MCF 10A (cell line): ENCODE measurements at regions of chr2 and their contacts with region 1.

Region 1: GRCh38 chr2:27322766-27323595 is at the start of gene MPV17:
- DNase-seq: peak; percentile 95
- H3K4me3 Mint-ChIP-seq: peak within 1 kb of the TSS; percentile 91
- H3K27ac Mint-ChIP-seq: peak within 1 kb of the TSS; percentile 99
- H3K4me1 Mint-ChIP-seq: peaks cover 23% of the 10 kb centered on the region
- H3K27me3 Mint-ChIP-seq: no peaks in the 10 kb centered on the region
- CTCF ChIP-seq: no peak
- total RNA-seq, gene MPV17: 104 and 114 TPM in 2 replicates

Region 2: DNA sequence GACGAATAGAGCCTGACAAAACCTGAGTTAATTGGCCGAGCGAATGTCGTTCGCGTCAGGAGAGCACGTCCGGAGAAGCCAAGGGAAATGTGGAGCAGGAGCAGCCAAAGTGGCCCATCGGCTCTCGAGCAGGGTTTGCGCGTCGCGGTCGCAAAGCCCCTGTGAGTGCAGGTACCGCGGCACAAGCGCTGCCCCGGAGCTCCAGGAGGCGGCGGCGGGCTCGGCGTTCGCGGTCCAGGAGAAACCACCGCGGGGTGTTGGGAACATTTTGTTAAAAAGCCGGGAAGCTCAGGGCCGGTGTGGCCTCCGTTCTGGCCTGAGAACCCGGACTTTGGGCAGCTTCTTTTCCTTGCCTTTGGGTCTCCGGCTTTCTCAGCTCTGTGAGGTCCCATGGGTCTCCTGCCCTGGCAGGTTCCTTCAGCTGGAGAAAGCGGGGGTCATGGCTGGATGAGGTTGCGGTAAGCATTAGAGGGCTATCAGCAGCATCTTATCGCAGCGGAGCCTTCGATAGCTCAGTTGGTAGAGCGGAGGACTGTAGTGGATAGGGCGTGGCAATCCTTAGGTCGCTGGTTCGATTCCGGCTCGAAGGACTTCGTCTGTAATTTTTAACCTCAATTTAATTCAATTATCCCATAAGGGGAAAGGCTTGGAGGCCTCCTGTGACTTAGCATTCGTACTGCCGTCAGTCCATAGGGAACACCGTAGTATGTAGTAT is 272.5 kb before region 1 on chr2:
- CTCF ChIA-PET with region 1: no interaction called
- POLR2A ChIA-PET with region 1: interaction called, 13 read pairs
- intact Hi-C with region 1: no loop called
- DNase-seq: peak; percentile 93
- H3K4me3 Mint-ChIP-seq: peak overlapping the region; percentile 93
- H3K27ac Mint-ChIP-seq: peak overlapping the region; percentile 84
- H3K4me1 Mint-ChIP-seq: no peaks in the 10 kb centered on the region
- H3K27me3 Mint-ChIP-seq: no peaks in the 10 kb centered on the region
- CTCF ChIP-seq: no peak

Region 3: GRCh38 chr2:27281855-27282559 is 41.0 kb before region 1 on chr2 and contains the start of gene TRIM54:
- CTCF ChIA-PET with region 1: interaction called, 12 read pairs
- POLR2A ChIA-PET with region 1: no interaction called
- intact Hi-C with region 1: no loop called
- DNase-seq: no peak
- H3K4me3 Mint-ChIP-seq: no peak within 1 kb of the TSS
- H3K27ac Mint-ChIP-seq: no peak within 1 kb of the TSS
- H3K4me1 Mint-ChIP-seq: peaks cover 12% of the 10 kb centered on the region
- H3K27me3 Mint-ChIP-seq: peaks cover 16% of the 10 kb centered on the region
- CTCF ChIP-seq: no peak
- total RNA-seq, gene TRIM54: not detected in 2 replicates

Region 4: DNA sequence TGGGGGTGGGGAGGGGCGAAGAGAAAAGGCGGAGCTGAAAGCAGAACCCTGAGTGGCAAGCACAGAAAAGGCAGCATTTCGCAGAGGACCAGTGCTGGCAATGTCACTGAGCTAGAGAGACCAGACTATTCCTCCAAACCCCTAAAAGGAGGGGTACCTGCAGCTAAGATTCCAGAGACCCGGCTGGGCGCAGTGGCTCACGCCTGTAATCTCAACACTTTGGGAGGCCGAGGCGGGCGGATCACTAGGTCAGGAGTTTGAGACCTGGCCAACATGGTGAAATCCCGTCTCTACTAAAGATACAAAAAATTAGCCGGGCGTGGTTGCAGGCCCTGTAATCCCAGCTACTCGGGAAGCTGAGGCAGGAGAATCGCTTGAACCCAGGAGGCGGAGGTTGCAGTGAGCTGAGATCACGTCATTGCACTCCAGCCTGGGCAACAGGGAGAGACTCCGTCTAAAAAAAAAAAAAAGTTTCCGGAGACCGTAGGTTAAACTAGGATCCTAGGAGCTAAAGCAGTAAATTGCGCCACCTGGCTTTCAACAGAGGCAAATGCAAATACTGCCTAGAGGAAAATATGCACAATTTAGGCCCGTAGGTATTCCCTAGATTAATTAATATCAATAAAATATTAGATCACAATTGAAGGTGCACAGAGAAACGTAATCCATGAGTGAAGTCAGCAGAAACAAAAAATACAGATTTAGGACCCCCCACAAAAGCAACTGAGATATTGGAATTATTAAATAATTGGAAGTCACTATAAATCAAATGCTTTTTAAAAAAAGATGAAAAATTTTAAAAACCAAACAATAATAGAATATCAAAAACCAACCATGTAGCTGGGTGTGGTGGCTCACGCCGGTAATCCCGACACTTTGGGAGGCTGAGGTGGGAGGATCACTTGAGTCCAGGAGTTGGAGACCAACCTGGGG is 19.6 kb before region 1 on chr2:
- CTCF ChIA-PET with region 1: interaction called, 23 read pairs
- POLR2A ChIA-PET with region 1: interaction called, 13 read pairs
- intact Hi-C with region 1: no loop called
- DNase-seq: peak; percentile 77
- H3K4me3 Mint-ChIP-seq: peak overlapping the region; percentile 31
- H3K27ac Mint-ChIP-seq: no peak overlapping the region
- H3K4me1 Mint-ChIP-seq: no peaks in the 10 kb centered on the region
- H3K27me3 Mint-ChIP-seq: no peaks in the 10 kb centered on the region
- CTCF ChIP-seq: peak; percentile 76

Region 5: DNA sequence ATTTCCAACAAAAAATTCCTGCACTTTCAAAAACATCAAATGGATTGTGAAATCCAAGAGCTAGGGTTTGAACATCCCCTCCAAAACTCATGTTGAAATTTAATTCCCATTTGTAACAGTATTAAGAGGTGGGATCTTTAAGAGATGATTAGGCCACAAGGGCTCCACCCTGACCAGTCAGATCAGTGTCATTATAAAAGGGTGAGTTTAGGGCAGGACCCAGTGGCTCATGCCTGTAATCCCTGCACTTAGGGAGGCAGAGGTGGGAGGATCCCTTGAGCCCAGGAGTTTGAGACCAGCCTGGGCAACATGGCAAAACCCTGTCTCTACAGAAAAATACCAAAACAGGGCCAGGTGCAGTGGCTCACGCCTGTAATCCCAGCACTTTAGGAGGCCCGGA is 24.7 kb after region 1 on chr2:
- CTCF ChIA-PET with region 1: interaction called, 8 read pairs
- POLR2A ChIA-PET with region 1: interaction called, 31 read pairs
- intact Hi-C with region 1: no loop called
- DNase-seq: no peak
- H3K4me3 Mint-ChIP-seq: no peak overlapping the region
- H3K27ac Mint-ChIP-seq: peak overlapping the region; percentile 19
- H3K4me1 Mint-ChIP-seq: peaks cover 20% of the 10 kb centered on the region
- H3K27me3 Mint-ChIP-seq: no peaks in the 10 kb centered on the region
- CTCF ChIP-seq: no peak

Region 6: DNA sequence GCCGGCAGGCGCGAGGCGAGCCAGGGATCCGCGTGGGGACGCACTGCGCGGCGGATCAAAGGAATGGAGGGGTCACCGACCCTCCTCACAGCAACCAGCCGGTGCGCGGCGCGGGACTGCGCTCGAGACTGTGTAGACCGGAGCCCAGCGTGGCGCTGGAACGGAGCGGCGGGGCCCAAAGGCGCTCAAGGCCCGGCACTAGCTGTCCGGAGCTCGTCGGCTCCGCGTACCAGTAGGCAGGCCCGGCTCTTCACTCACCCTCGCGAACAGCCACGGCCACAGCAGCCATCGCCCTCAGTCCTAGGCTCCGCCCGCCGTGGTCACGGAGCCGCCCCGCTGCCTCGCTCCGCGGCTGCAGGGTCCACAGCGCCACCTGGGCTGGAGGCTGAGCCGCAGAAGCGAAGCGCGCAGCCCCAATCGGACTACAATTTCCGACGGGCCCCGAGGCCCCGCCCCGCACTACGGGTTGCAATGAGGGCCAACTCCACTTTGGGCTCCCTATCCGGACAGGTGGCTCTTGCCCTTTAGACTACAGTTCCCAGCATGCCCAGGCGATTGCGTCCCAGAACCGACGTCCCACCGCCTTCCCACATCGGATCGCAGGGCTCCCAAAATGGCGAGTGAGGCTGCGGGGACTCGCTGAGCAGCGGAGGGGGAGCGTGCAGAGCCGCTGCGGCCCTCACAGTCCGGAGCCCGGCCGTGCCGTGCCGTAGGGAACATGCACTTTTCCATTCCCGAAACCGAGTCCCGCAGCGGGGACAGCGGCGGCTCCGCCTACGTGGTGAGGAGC is 47.2 kb after region 1 on chr2 and contains the starts of genes EIF2B4 and SNX17:
- CTCF ChIA-PET with region 1: interaction called, 47 read pairs
- POLR2A ChIA-PET with region 1: interaction called, 142 read pairs
- intact Hi-C with region 1: loop called (anchors 1 kb)
- DNase-seq: peak; percentile 99
- H3K4me3 Mint-ChIP-seq: peak within 1 kb of the TSS; percentile 86
- H3K27ac Mint-ChIP-seq: peak within 1 kb of the TSS; percentile 81
- H3K4me1 Mint-ChIP-seq: peaks cover 21% of the 10 kb centered on the region
- H3K27me3 Mint-ChIP-seq: no peaks in the 10 kb centered on the region
- CTCF ChIP-seq: peak; percentile 69
- total RNA-seq, gene EIF2B4: 42.7 and 50.1 TPM in 2 replicates
- total RNA-seq, gene SNX17: 101 and 125 TPM in 2 replicates

Region 7: GRCh38 chr2:27409321-27410073 is 86.5 kb after region 1 on chr2 and contains the start of gene PPM1G:
- CTCF ChIA-PET with region 1: no interaction called
- POLR2A ChIA-PET with region 1: interaction called, 12 read pairs
- intact Hi-C with region 1: no loop called
- DNase-seq: peak; percentile 91
- H3K4me3 Mint-ChIP-seq: peak within 1 kb of the TSS; percentile 77
- H3K27ac Mint-ChIP-seq: peak within 1 kb of the TSS; percentile 78
- H3K4me1 Mint-ChIP-seq: peaks cover 15% of the 10 kb centered on the region
- H3K27me3 Mint-ChIP-seq: no peaks in the 10 kb centered on the region
- CTCF ChIP-seq: no peak
- total RNA-seq, gene PPM1G: 85.7 and 123 TPM in 2 replicates